Common myeloid progenitor, CD34-positive (primary cell): ENCODE measurements at regions of chr6 and their contacts with region 1.

Region 1: GRCh38 chr6:16964553-16965501 is 137.0 kb upstream of the STMND1 start:
- DNase-seq: peak; percentile 67 to 83 (median 81)
- H3K4me3 ChIP-seq: peak overlapping the region in 1 of 7 experiments; percentile 20
- H3K27ac ChIP-seq: no peak overlapping the region
- H3K4me1 ChIP-seq: peaks cover 0 to 16% (median 7%) of the 10 kb centered on the region in 4 experiments
- H3K27me3 ChIP-seq: peaks cover 0 to 3% (median 0%) of the 10 kb centered on the region in 5 experiments

Region 2: GRCh38 chr6:16761471-16762267 is 203.2 kb before region 1 on chr6:
- CTCF ChIA-PET with region 1: interaction called, 70 read pairs
- POLR2A ChIA-PET with region 1: no interaction called
- DNase-seq: peak; percentile 90 to 95 (median 93)
- H3K4me3 ChIP-seq: peak overlapping the region; percentile 63 to 96 (median 91)
- H3K27ac ChIP-seq: peak overlapping the region; percentile 46 to 79
- H3K4me1 ChIP-seq: peaks cover 0 to 31% (median 23%) of the 10 kb centered on the region in 4 experiments
- H3K27me3 ChIP-seq: no peaks in the 10 kb centered on the region

Region 3: GRCh38 chr6:16812993-16813392 is 151.8 kb before region 1 on chr6:
- CTCF ChIA-PET with region 1: no interaction called
- POLR2A ChIA-PET with region 1: no interaction called
- DNase-seq: no peak
- H3K4me3 ChIP-seq: no peak overlapping the region
- H3K27ac ChIP-seq: no peak overlapping the region
- H3K4me1 ChIP-seq: no peaks in the 10 kb centered on the region
- H3K27me3 ChIP-seq: no peaks in the 10 kb centered on the region

Region 4: DNA sequence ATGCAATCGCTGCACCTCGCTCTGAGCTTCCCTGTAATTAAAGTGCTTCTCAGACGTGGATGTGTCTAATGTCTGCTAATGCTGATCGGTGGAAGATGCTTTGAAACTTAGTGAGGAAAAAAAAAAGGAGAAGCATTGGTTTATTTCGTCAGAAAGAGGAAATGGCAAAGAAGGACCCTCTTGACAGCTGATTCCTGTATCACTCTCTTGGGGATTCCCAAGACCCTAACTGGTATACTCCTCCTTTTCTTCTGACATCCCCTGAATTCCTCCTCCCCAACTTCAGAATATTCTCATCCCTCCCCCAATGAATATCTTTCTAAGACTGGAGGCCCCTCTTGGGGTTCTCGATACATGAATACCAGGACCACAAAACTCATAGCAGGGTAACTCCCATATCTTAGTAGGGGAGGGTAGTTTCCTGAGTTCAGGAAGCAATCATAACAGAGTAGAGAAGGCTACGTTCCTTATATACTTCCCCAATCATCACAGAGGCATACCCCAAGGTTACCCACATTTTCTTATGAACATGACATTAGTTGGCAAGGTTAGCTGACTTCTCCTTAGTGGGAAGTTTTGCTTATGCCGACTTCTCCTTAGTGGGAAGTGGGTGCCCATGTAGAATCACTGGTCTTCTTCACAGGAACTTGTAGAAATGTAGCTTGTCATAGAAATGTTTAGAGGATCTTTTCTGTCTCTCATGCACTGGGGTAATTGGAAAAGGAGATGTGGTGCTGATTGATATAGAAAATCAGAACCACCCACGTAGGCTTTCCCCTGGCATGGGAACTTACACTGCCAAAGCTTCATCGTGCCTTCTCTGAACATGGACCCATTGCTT is 139.8 kb before region 1 on chr6:
- CTCF ChIA-PET with region 1: interaction called, 11 read pairs
- POLR2A ChIA-PET with region 1: no interaction called
- DNase-seq: peak; percentile 50 to 87 (median 87)
- H3K4me3 ChIP-seq: peak overlapping the region in 3 of 7 experiments; percentile 8 to 22 (median 15)
- H3K27ac ChIP-seq: no peak overlapping the region
- H3K4me1 ChIP-seq: peaks cover 13 to 21% (median 16%) of the 10 kb centered on the region in 4 experiments
- H3K27me3 ChIP-seq: no peaks in the 10 kb centered on the region

Region 5: GRCh38 chr6:16947375-16948015 is 17.3 kb before region 1 on chr6:
- CTCF ChIA-PET with region 1: interaction called, 21 read pairs
- POLR2A ChIA-PET with region 1: interaction called, 4 read pairs
- DNase-seq: peak; percentile 41 to 69 (median 59)
- H3K4me3 ChIP-seq: no peak overlapping the region
- H3K27ac ChIP-seq: no peak overlapping the region
- H3K4me1 ChIP-seq: peaks cover 0 to 15% (median 2%) of the 10 kb centered on the region in 4 experiments
- H3K27me3 ChIP-seq: no peaks in the 10 kb centered on the region

Region 6: DNA sequence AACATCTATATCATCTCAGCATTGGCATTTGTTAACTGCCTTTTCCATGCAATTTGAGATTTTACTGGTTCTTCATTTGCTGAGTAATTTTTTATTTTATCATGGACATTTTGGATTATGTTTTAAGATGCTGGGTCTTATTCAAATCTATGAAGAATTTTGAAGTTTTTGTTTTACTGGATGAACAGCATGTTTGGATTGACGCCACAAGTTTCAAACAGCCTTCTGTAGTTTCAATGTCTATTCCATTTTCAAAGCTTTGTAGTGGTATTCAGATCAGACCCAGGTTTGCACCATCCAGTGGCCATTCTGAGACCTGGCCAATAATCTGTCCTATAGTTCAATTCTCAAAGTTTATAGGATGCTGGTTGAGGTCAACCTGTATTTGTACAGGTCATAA is 11.4 kb before region 1 on chr6:
- CTCF ChIA-PET with region 1: interaction called, 21 read pairs
- POLR2A ChIA-PET with region 1: no interaction called
- DNase-seq: no peak
- H3K4me3 ChIP-seq: no peak overlapping the region
- H3K27ac ChIP-seq: no peak overlapping the region
- H3K4me1 ChIP-seq: no peaks in the 10 kb centered on the region
- H3K27me3 ChIP-seq: no peaks in the 10 kb centered on the region